ENCODE measurements at regions of chr7 and their contacts with region 1.

Region 1: GRCh38 chr7:27196287-27196767 is 3.6 kb downstream of the HOXA13 start:
- DNase-seq: peak; percentile 91
- H3K4me3 ChIP-seq: no peak overlapping the region
- H3K27ac ChIP-seq: no peak overlapping the region
- H3K4me1 ChIP-seq: peaks cover 15 to 68% (median 54%) of the 10 kb centered on the region in 6 donors
- H3K27me3 ChIP-seq: peaks cover 42 to 100% (median 96%) of the 10 kb centered on the region in 7 donors
- CTCF ChIP-seq: peak; percentile 22 to 79 (median 65)
- POLR2A ChIP-seq: no peak

Region 2: DNA sequence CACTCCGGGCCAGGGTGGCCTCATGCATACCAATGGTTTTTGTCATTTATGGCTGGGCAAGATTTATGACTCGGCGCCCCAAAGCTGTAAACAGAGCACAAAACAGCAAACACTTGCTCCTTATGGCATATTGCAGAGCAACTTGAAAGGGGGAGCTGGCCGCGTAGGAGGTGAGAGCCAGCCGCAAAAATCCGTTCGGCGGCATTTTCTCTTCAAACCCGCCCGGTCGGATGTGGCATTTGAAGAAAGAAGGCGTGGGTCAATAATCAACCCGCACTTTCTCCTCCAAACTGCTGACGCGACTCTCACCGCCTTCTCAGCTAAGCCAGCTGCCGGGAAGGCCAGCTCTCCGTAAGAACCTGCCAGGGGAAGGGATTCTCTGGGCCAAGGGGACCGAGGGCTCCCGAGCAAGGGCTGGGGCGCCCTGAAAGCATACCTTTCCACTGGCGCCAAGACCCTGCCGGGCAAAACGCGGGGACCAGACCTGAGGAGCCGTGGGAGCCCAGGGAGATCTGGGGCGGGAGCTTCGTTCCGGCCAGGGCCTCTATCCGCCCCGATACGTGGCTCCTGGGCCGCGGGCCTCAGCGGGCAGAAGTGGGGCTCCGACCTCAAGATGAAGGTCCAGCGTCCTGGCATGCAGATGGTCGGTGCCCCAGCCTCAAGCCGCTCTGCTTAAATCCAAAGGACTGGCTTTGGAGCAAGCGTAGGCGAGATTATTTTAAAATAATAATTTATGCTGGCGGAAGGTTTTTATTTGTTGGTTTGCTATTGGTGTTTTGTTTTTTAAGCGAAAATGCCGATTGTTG is 80.9 kb before region 1 on chr7:
- intact Hi-C with region 1: no loop called
- DNase-seq: no peak
- H3K4me3 ChIP-seq: peak overlapping the region in 6 of 8 donors; percentile 2 to 59 (median 25)
- H3K27ac ChIP-seq: peak overlapping the region; percentile 27 to 89 (median 71)
- H3K4me1 ChIP-seq: peaks cover 0 to 62% (median 27%) of the 10 kb centered on the region in 6 donors
- H3K27me3 ChIP-seq: no peaks in the 10 kb centered on the region
- CTCF ChIP-seq: no peak
- POLR2A ChIP-seq: no peak

Region 3: DNA sequence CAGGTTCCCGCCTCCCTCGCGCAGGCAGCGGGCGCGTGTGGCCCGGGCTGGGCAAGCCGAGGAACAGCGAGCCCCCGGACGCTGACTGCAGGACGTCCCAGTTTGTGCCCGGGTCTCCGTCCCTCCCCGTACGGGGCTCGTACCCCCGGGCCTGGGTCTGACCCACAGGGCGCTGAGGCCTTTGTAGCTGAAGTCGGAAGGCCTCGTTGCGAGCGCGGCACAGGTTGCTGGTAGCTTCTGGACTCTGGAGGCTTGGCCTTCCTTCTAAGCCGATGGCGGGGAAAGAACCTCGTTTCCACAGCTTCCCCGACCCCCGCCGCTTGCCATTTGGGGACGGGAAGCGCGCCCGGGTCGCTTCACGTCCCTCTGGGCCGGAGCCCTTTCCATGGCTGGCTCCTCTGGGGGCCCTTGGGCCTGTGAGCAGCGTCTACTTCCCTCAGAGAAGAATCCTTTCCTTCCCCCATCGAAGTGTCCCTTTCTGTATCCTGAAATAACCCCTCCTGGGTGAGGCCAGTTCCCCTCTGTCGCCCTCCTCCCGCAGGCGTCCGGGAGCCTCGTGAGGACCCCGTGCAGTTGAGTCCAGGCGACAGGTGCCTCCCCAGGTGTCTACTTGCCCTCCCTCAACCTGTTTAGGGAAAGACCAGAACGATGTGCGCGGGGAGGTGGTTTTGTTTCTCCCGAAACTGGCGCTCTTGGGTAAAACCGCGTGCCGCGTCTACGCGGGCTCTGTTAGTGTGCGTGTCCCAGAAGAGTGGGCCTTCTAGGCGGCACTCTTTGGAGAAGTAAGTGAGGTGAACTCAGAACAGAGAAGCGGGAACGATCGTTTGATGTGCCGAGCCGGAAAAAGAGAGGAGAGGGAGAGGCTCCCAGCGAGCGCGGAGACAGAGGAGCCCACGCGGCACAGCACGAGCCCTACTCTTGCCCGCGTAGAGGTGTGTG is 55.6 kb after region 1 on chr7:
- intact Hi-C with region 1: no loop called
- DNase-seq: no peak
- H3K4me3 ChIP-seq: peak overlapping the region in 3 of 8 donors; percentile 6 to 49 (median 11)
- H3K27ac ChIP-seq: no peak overlapping the region
- H3K4me1 ChIP-seq: peaks cover 11 to 34% (median 25%) of the 10 kb centered on the region in 6 donors
- H3K27me3 ChIP-seq: peaks cover 7 to 90% (median 71%) of the 10 kb centered on the region in 7 donors
- CTCF ChIP-seq: no peak
- POLR2A ChIP-seq: no peak

Region 4: GRCh38 chr7:27784393-27785053 is 588.2 kb after region 1 on chr7:
- intact Hi-C with region 1: loop called (anchors 10 kb)
- DNase-seq: no peak
- H3K4me3 ChIP-seq: no peak overlapping the region
- H3K27ac ChIP-seq: no peak overlapping the region
- H3K4me1 ChIP-seq: peaks cover 0 to 9% (median 3%) of the 10 kb centered on the region in 6 donors
- H3K27me3 ChIP-seq: no peaks in the 10 kb centered on the region
- CTCF ChIP-seq: peak in 10 of 11 experiments; percentile 23 to 62 (median 51)
- POLR2A ChIP-seq: no peak

Region 5: GRCh38 chr7:27921081-27921836 is 724.9 kb after region 1 on chr7:
- intact Hi-C with region 1: loop called (anchors 10 kb)
- DNase-seq: no peak
- H3K4me3 ChIP-seq: no peak overlapping the region
- H3K27ac ChIP-seq: no peak overlapping the region
- H3K4me1 ChIP-seq: peaks cover 0 to 74% (median 22%) of the 10 kb centered on the region in 6 donors
- H3K27me3 ChIP-seq: no peaks in the 10 kb centered on the region
- CTCF ChIP-seq: peak in 10 of 11 experiments; percentile 13 to 73 (median 45)
- POLR2A ChIP-seq: no peak

Region 6: GRCh38 chr7:28020302-28020940 is 824.1 kb after region 1 on chr7:
- intact Hi-C with region 1: loop called (anchors 10 kb)
- DNase-seq: no peak
- H3K4me3 ChIP-seq: no peak overlapping the region
- H3K27ac ChIP-seq: no peak overlapping the region
- H3K4me1 ChIP-seq: peaks cover 0 to 25% (median 8%) of the 10 kb centered on the region in 6 donors
- H3K27me3 ChIP-seq: no peaks in the 10 kb centered on the region
- CTCF ChIP-seq: peak; percentile 47 to 87 (median 76)
- POLR2A ChIP-seq: no peak

Region 7: DNA sequence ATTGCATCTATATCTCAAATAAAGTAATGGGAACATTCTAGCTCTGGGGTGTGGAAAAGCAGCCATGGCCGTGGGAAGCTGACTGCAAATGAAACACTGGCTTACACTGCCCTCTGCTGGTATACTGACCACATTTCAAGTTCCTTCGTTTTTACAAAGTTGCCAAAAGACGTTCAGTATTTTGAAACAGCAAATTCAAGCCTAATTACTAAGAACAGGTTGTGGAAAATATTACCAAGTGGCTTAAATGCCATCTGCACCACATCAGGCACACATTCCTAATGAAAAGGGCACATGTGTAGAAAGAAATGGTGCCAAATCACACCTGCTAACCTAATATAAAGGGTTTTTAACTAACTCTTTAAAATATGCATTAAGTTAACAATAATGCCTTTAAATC is 900.4 kb after region 1 on chr7:
- intact Hi-C with region 1: loop called (anchors 10 kb)
- DNase-seq: no peak
- H3K4me3 ChIP-seq: no peak overlapping the region
- H3K27ac ChIP-seq: no peak overlapping the region
- H3K4me1 ChIP-seq: peaks cover 0 to 49% (median 16%) of the 10 kb centered on the region in 6 donors
- H3K27me3 ChIP-seq: no peaks in the 10 kb centered on the region
- CTCF ChIP-seq: peak; percentile 50 to 89 (median 80)
- POLR2A ChIP-seq: no peak

Measured in spleen (tissue), 13 donors.